ENCODE measurements at regions of chr17 and their contacts with region 1.

Region 1: GRCh38 chr17:29369831-29370735 is 20.1 kb upstream of the TAOK1 start:
- DNase-seq: peak; percentile 60
- ATAC-seq: peak; percentile 91

Region 2: DNA sequence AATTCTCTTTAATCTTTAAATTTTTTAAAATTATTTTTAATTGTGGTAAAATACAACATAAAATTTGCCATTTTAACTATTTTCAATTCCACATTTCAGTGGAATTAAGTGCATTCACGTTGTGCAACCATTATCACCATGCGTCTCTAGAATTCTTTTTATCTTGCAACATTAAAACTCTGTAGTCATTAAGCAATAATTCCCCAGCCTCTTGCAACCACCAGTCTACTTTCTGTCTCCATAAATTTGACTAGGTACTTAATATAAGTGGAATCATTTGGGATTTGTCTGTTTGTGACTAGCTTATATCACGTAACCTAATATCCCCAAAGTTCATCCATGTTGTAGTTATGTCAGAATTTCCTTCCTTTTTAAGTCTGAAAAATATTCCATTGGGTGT is 99.2 kb after region 1 on chr17:
- intact Hi-C with region 1: loop called (anchors 10 kb)
- DNase-seq: no peak
- ATAC-seq: no peak

Region 3: DNA sequence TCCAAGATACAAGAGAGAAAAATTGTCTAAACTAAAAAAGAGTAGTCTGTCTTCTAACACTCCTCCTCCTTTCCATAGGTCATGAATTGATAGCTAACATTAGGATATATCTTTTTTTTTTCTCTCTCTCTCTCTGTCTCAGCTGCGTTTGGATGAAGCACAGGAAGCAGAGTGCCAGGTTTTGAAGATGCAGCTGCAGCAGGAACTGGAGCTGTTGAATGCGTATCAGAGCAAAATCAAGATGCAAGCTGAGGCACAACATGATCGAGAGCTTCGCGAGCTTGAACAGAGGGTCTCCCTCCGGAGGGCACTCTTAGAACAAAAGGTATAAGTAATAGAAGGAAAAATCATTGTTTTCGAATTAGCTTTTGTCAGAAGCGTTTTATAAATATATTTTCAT is 163.9 kb after region 1 on chr17:
- intact Hi-C with region 1: loop called (anchors 2 kb)
- DNase-seq: no peak
- ATAC-seq: no peak